Spleen (tissue), 13 donors: ENCODE measurements at regions of chr1 and their contacts with region 1.

Region 1: GRCh38 chr1:220046052-220046930 is at the start of gene EPRS1:
- DNase-seq: peak; percentile 99
- H3K4me3 ChIP-seq: peak within 1 kb of the TSS; percentile 83 to 97 (median 92)
- H3K27ac ChIP-seq: peak within 1 kb of the TSS; percentile 78 to 93 (median 88)
- H3K4me1 ChIP-seq: peaks cover 13 to 45% (median 33%) of the 10 kb centered on the region in 6 donors
- H3K27me3 ChIP-seq: no peaks in the 10 kb centered on the region
- CTCF ChIP-seq: peak; percentile 93 to 99 (median 98)
- POLR2A ChIP-seq: peak in 1 of 3 donors; percentile 28
- total RNA-seq, gene EPRS1: 50.8 to 72.2 (median 59.6) TPM

Region 2: DNA sequence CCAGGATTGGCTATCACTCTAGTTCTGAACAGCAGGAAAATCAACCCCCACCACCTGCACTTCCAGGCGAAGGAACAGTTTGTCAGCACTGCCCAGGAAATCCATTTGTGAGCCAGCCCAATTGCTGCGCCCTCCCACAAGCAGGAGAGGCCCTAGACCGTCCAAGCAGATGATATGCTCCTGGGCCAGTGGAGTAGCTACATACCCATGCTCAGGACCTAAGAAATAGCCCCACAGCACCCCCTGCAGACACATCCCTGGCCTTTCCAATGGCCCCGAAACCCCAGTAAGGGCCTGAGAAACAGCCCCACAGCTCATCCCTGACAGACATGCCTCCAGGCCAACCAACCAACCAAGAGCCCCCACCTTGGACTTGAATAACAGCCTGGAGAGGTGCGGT is 321.9 kb before region 1 on chr1:
- intact Hi-C with region 1: no loop called
- DNase-seq: no peak
- H3K4me3 ChIP-seq: no peak overlapping the region
- H3K27ac ChIP-seq: no peak overlapping the region
- H3K4me1 ChIP-seq: no peaks in the 10 kb centered on the region
- H3K27me3 ChIP-seq: no peaks in the 10 kb centered on the region
- CTCF ChIP-seq: no peak
- POLR2A ChIP-seq: no peak

Region 3: GRCh38 chr1:220013497-220013896 is 32.8 kb before region 1 on chr1:
- intact Hi-C with region 1: no loop called
- DNase-seq: no peak
- H3K4me3 ChIP-seq: no peak overlapping the region
- H3K27ac ChIP-seq: no peak overlapping the region
- H3K4me1 ChIP-seq: peaks cover 0 to 5% (median 2%) of the 10 kb centered on the region in 6 donors
- H3K27me3 ChIP-seq: no peaks in the 10 kb centered on the region
- CTCF ChIP-seq: no peak
- POLR2A ChIP-seq: no peak

Region 4: GRCh38 chr1:220089650-220090556 is 43.6 kb after region 1 on chr1 and contains the start of gene BPNT1:
- intact Hi-C with region 1: loop called (anchors 10 kb)
- DNase-seq: peak; percentile 96
- H3K4me3 ChIP-seq: peak within 1 kb of the TSS; percentile 43 to 86 (median 60)
- H3K27ac ChIP-seq: peak within 1 kb of the TSS; percentile 76 to 89 (median 86)
- H3K4me1 ChIP-seq: peaks cover 3 to 65% (median 37%) of the 10 kb centered on the region in 6 donors
- H3K27me3 ChIP-seq: no peaks in the 10 kb centered on the region
- CTCF ChIP-seq: peak in 1 of 11 experiments; percentile 16
- POLR2A ChIP-seq: peak in 2 of 3 donors; percentile 44 to 52
- total RNA-seq, gene BPNT1: 15.9 to 25.8 (median 19.9) TPM